ENCODE measurements at regions of chr15 and their contacts with region 1.

Region 1: GRCh38 chr15:56821721-56822425 is 88.6 kb upstream of the ZNF280D start:
- DNase-seq: peak in 8 of 10 donors; percentile 15 to 74 (median 54)
- H3K4me3 ChIP-seq: no peak overlapping the region
- H3K27ac ChIP-seq: no peak overlapping the region
- H3K27me3 ChIP-seq: no peaks in the 10 kb centered on the region
- CTCF ChIP-seq: peak in 55 of 56 donors; percentile 35 to 91 (median 67)

Region 2: GRCh38 chr15:56491110-56491722 is 330.7 kb before region 1 on chr15:
- intact Hi-C with region 1: loop called in 1 of 2 experiments (anchors 5 kb)
- DNase-seq: peak; percentile 43 to 85 (median 74)
- H3K4me3 ChIP-seq: no peak overlapping the region
- H3K27ac ChIP-seq: no peak overlapping the region
- H3K27me3 ChIP-seq: no peaks in the 10 kb centered on the region
- CTCF ChIP-seq: peak; percentile 64 to 90 (median 82)

Region 3: DNA sequence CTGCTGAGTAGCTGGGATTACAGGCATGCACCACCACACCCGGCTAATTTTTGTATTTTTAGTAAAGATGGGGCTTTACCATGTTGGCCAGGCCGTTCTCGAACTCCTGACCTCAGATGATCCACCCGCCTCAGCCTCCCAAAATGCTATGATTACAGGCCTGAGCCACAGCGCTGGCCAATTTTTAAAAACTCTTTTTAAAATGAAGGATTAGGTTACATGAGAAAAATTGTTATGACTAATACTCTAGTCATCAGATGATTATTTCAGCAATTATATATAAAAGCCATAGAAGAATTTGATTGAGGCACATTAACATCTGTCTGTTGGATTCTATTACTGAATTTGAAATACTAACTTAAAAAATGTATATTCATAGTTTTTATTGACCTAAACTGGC is 222.9 kb before region 1 on chr15:
- intact Hi-C with region 1: no loop called
- DNase-seq: no peak
- H3K4me3 ChIP-seq: no peak overlapping the region
- H3K27ac ChIP-seq: no peak overlapping the region
- H3K27me3 ChIP-seq: no peaks in the 10 kb centered on the region
- CTCF ChIP-seq: no peak

Region 4: DNA sequence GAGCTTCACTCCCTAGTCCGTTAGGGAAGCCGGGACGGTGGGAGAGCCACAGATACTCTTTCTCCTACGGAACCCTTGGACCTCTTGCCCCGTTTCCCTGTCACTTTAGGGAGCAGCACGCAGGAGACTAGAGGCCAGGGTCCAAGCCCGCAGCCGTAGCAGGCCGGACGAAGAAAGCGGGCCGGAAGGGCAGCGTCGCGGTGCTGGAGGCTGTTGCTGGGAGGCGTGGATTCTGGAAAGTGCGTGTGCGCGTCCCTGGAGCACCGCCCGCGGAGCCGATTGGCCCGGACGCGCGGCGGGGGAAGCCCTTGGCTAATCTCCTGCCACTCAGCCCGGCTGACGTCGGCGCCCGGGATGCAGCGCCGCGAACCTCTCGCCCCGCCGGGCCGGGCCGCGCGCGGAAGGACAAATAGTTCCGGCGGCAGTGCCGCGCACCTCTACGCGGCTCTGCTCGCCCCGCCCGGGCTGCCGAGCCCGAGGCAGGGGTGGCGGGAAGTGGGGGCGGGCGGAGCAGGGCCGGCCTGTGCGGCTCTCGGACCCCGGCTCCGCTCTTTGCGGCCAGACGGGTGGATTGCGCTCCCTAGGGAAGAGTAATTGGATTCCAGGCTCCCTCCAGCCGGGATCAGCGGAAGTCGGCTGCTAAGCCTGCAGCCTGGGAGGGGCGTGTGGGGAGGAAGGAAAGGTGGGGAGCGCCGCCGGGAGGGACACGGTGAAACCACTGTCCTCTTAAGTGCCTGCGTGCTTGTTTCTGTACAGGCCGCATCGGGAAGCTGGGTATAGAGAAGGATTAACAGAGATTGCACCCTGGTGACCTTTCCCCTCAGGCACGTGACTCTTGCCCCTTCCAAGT is 65.3 kb after region 1 on chr15:
- intact Hi-C with region 1: loop called (anchors 5 to 10 kb)
- DNase-seq: peak; percentile 83 to 96 (median 92)
- H3K4me3 ChIP-seq: peak overlapping the region; percentile 57 to 94 (median 81)
- H3K27ac ChIP-seq: peak overlapping the region; percentile 86 to 100 (median 99)
- H3K27me3 ChIP-seq: no peaks in the 10 kb centered on the region
- CTCF ChIP-seq: peak in 35 of 56 donors; percentile 5 to 61 (median 34)

Region 5: DNA sequence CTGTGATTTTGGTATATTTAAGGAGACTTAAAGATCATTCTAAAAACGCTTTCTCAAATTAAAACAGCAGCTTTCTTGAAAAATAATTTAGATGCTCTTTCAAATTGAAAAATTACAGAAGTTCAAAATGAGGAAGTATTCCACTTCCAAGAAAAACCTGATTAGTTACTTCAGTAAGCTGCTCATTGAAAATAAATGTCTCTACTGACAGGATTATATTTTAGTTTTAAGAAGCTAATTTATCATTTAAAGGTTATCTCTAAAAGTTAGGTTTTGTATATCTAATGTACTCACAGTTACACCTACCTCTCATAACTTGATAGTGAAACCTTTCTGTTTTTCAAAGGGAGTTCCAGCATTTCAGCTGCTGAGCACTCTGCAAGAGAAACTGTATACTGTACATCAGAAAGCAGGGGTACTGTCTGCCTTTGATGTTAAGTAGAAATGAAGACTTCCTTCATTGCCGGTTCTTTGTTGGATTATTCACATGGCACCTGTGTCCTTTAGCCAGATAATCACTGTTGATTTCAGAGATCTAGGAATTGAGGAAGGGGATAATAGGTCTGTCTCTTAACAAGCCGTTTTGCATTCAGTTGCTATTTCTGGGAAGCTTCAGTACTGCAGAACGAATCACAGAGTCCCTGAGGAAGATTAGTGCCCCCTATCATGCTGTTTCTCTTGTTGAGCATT is 258.2 kb after region 1 on chr15:
- intact Hi-C with region 1: loop called in 1 of 2 experiments (anchors 5 kb)
- DNase-seq: no peak
- H3K4me3 ChIP-seq: peak overlapping the region in 36 of 59 donors; percentile 0 to 47 (median 22)
- H3K27ac ChIP-seq: peak overlapping the region in 58 of 59 donors; percentile 1 to 86 (median 76)
- H3K27me3 ChIP-seq: no peaks in the 10 kb centered on the region
- CTCF ChIP-seq: peak in 34 of 56 donors; percentile 11 to 55 (median 30)

Region 6: GRCh38 chr15:57527382-57528091 is 705.7 kb after region 1 on chr15:
- intact Hi-C with region 1: loop called in 1 of 2 experiments (anchors 10 kb)
- DNase-seq: peak in 1 of 10 donors; percentile 36
- H3K4me3 ChIP-seq: no peak overlapping the region
- H3K27ac ChIP-seq: peak overlapping the region in 16 of 59 donors; percentile 4 to 68 (median 40)
- H3K27me3 ChIP-seq: peaks cover 0 to 2% (median 0%) of the 10 kb centered on the region in 45 donors
- CTCF ChIP-seq: peak; percentile 58 to 97 (median 79)

Measured in dorsolateral prefrontal cortex (tissue), 120 donors.